Sciatic nerve (tissue), 2 donors: ENCODE measurements at regions of chr6 and their contacts with region 1.

Region 1: DNA sequence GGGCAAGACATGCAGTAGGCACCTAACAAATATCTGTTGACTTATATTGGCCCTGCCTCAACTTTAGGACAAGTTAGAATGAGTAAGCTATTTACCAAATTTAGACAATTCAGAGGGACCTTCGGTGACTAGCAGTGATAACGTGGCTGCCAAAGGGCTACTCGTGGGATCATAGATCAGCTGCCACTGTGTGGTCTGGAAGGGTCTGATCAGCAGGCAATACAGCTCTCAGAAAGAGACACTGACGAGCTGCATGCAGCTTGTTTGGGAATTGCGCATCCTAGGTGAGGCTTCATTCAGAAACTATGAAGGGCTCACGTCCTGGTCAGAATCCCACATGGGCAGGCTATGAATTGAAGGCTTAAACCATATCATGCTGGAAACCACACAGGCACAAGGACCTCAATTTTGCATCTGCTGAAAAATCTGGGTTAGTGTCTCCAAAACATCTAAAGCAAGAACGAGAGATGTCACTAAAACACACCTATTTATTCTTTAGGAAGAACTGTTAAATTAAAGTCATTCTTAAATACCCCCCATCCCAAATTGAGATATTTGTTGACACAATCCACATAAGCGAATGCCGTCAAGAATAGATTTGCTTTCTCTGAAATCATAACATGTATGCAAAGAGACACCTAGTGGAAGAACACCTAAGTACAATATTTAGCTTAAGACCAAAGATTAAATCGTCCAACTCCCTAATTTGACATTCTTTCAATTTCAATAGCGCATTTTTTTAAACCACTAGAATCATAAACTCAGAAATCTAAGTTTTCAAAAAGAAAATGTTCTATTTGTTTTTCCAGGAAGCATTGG is 79.6 kb downstream of the IPCEF1 start:
- DNase-seq: no peak
- ATAC-seq: peak; percentile 68

Region 2: DNA sequence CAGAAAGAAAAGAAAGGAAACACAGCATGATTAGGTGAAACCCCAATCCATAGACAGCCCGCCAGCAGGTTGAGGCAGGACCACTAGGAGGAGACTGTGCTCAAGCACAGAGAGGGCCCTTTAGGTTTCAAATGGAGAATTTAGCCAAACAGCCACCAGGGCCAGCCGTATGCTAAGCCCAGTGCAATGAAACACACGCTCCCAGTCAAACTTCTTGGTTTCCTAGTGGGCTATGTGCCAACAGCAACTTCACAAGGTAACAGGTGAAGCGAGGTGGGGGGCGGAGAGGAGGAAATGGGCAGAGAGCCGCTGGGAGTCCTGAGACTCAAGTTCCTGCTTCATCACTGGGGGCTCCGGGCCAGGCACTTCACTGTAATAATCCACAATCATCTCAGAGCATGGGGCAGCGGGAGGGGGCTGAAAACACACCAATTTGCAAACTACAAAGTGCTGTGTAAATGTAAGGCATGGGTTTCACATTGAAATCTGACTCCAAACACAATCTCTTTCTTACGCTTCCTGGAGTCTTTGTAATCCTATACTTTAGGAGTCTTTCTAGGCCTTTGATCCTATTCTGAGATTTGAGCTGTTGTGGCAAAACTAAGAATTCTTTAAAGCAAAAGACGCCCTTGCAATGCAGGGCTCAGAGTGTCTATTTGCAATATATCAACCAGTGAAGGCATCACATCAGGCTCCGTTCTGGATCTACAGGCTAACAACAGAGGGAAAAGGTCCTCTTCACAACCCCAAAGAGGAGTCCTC is 120.7 kb before region 1 on chr6:
- intact Hi-C with region 1: loop called (anchors 10 kb)
- DNase-seq: no peak
- ATAC-seq: peak; percentile 74